ENCODE measurements at regions of chr6 and their contacts with region 1.

Region 1: GRCh38 chr6:55776113-55776512 is 99.3 kb downstream of the BMP5 start:
- DNase-seq: no peak
- H3K4me3 ChIP-seq: no peak overlapping the region
- H3K27ac ChIP-seq: no peak overlapping the region
- H3K4me1 ChIP-seq: no peaks in the 10 kb centered on the region
- H3K27me3 ChIP-seq: no peaks in the 10 kb centered on the region
- CTCF ChIP-seq: no peak

Region 2: DNA sequence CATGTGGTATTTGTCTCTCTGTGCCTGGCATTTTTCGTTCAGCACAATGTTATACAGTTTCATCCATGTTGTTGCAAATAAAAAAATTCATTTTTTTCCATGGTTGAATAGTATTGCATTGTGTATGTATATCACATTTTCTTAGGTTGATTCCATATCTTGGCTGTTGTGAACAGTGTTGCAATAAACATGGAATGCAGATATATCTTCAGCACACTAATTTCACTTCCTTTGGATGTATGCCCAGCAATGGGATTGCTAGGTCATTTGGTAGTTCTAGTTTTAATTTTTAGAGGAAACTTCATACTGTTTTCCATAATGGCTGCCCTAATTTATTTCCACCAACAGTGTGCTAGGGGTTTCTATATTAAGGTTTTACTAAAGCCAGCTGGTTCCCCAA is 396.2 kb before region 1 on chr6:
- CTCF ChIA-PET with region 1: no interaction called
- dilution Hi-C with region 1: no loop called
- in situ Hi-C with region 1: no loop called
- intact Hi-C with region 1: no loop called
- DNase-seq: no peak
- H3K4me3 ChIP-seq: no peak overlapping the region
- H3K27ac ChIP-seq: no peak overlapping the region
- H3K4me1 ChIP-seq: no peaks in the 10 kb centered on the region
- H3K27me3 ChIP-seq: no peaks in the 10 kb centered on the region
- CTCF ChIP-seq: no peak

Region 3: GRCh38 chr6:55729665-55730064 is 46.4 kb before region 1 on chr6:
- CTCF ChIA-PET with region 1: no interaction called
- dilution Hi-C with region 1: no loop called
- in situ Hi-C with region 1: no loop called
- intact Hi-C with region 1: loop called (anchors 1 kb)
- DNase-seq: peak; percentile 5
- H3K4me3 ChIP-seq: no peak overlapping the region
- H3K27ac ChIP-seq: no peak overlapping the region
- H3K4me1 ChIP-seq: no peaks in the 10 kb centered on the region
- H3K27me3 ChIP-seq: no peaks in the 10 kb centered on the region
- CTCF ChIP-seq: no peak

Measured in mammary epithelial cell (primary cell).